Heart right ventricle (tissue), 16 donors: ENCODE measurements at regions of chr5 and their contacts with region 1.

Region 1: DNA sequence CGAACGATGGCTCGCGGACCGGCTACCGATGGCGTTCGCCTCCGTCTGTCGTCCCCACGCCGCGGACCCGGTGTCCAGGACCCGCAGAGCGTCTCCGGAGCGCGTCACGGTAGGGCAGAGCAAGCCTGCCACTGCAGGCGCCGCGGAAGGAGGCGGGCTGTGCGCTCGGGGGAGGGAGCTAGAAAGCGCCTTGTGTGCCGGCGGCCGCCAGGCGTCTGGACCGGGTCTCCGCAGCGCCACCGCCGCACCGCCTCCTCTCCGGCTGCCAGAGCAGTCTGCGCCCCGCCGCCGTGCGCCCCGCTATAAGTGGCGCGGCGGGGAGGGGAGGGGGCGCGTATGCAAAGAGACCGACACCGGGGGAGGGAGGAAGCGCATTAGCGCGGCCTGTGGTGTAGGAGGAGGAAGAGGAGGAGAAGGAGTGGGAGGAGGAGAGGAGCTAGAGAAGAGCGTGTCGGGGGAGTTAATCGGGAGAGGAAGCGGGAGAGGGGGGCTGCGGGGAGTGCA is at the start of gene ENC1:
- DNase-seq: peak; percentile 87 to 89
- ATAC-seq: peak; percentile 85 to 95 (median 89)
- H3K4me3 ChIP-seq: peak within 1 kb of the TSS; percentile 36 to 89 (median 81)
- H3K27ac ChIP-seq: peak within 1 kb of the TSS; percentile 61 to 97 (median 92)
- H3K4me1 ChIP-seq: peaks cover 5 to 67% (median 43%) of the 10 kb centered on the region in 9 donors
- H3K27me3 ChIP-seq: no peaks in the 10 kb centered on the region
- CTCF ChIP-seq: peak; percentile 44 to 70 (median 60)
- total RNA-seq, gene ENC1: 2.8 to 9.1 (median 4.0) TPM

Region 2: GRCh38 chr5:74035521-74035981 is 605.0 kb before region 1 on chr5:
- intact Hi-C with region 1: loop called (anchors 2 to 10 kb)
- DNase-seq: peak in 1 of 2 donors; percentile 63
- ATAC-seq: peak; percentile 47 to 90 (median 80)
- H3K4me3 ChIP-seq: no peak overlapping the region
- H3K27ac ChIP-seq: no peak overlapping the region
- H3K4me1 ChIP-seq: peaks cover 0 to 11% (median 5%) of the 10 kb centered on the region in 9 donors
- H3K27me3 ChIP-seq: no peaks in the 10 kb centered on the region
- CTCF ChIP-seq: peak; percentile 16 to 72 (median 52)

Region 3: DNA sequence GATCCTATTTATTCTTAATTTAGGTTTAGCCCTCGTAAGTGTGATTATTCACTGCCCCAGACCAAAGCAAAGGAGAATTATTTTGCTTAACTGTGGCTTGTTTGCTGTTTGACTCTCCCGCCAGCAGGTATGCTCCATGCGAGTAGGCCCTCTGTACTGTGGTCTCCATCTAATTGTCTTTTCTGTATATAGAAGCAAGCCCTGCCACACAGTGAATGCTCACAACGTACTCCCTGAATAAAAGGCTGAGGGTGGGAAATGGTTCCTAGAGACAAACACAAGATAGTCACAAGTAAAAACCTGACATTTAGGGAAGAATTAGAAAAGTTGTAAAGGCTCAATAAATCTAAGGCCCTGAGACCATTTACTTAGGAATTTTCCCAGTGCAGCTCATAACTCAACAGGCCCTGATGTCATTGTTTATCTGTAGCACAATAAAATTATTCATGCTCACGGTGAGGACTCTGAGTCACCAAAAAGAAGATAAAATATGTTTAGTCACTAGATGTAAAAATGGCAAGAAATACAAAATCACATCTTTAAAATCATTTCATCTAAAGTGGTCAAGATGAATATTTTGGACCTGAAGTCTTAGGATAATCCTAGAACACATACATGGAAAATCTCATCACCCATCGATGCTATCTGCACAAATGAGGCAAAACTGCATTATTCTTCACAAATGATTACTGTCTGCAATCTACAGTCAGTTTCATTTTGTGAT is 473.1 kb before region 1 on chr5:
- intact Hi-C with region 1: loop called in 2 of 10 experiments (anchors 10 kb)
- DNase-seq: no peak
- ATAC-seq: peak in 1 of 8 donors; percentile 65
- H3K4me3 ChIP-seq: no peak overlapping the region
- H3K27ac ChIP-seq: peak overlapping the region in 1 of 10 donors; percentile 7
- H3K4me1 ChIP-seq: peaks cover 0 to 33% (median 15%) of the 10 kb centered on the region in 9 donors
- H3K27me3 ChIP-seq: no peaks in the 10 kb centered on the region
- CTCF ChIP-seq: no peak

Region 4: DNA sequence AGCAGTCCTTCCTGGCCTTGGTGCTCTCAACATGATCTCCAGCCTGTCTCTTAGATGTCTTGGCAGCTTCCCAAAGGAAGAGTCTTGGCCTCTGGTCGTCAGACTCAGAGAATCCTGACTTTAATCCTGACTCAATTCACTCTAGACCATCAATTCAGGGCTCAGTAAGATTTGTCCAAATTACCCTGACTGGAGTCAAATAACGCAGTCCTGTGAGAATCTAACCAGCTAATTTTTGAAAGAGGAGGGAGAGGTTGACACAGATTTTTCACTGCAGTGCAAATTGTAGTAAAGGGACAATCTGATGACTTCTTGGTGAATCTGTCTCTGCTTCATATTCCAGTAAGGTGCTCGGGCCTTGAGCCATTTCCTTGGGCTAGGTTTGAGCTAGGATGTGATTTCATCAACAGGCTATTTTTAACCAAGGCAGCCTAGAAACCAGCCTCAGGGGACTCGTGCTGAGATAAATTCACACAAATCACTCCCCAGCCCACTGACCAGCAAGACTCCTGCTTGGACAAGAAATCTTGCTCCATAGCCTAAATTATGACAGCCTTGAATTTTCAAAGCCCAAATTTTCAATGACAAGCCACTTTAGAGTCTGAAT is 257.4 kb before region 1 on chr5:
- intact Hi-C with region 1: loop called in 5 of 10 experiments (anchors 2 to 5 kb)
- DNase-seq: peak in 1 of 2 donors; percentile 80
- ATAC-seq: peak; percentile 70 to 93 (median 87)
- H3K4me3 ChIP-seq: no peak overlapping the region
- H3K27ac ChIP-seq: peak overlapping the region; percentile 42 to 85 (median 70)
- H3K4me1 ChIP-seq: peaks cover 0 to 71% (median 45%) of the 10 kb centered on the region in 9 donors
- H3K27me3 ChIP-seq: no peaks in the 10 kb centered on the region
- CTCF ChIP-seq: no peak

Region 5: GRCh38 chr5:74500110-74500917 is 140.2 kb before region 1 on chr5:
- intact Hi-C with region 1: loop called in 1 of 10 experiments (anchors 10 kb)
- DNase-seq: no peak
- ATAC-seq: no peak
- H3K4me3 ChIP-seq: no peak overlapping the region
- H3K27ac ChIP-seq: peak overlapping the region in 1 of 10 donors; percentile 17
- H3K4me1 ChIP-seq: peaks cover 0 to 31% (median 8%) of the 10 kb centered on the region in 9 donors
- H3K27me3 ChIP-seq: no peaks in the 10 kb centered on the region
- CTCF ChIP-seq: no peak

Region 6: GRCh38 chr5:74519161-74519571 is 121.3 kb before region 1 on chr5:
- intact Hi-C with region 1: no loop called
- DNase-seq: no peak
- ATAC-seq: no peak
- H3K4me3 ChIP-seq: no peak overlapping the region
- H3K27ac ChIP-seq: no peak overlapping the region
- H3K4me1 ChIP-seq: peaks cover 0 to 19% (median 0%) of the 10 kb centered on the region in 9 donors
- H3K27me3 ChIP-seq: no peaks in the 10 kb centered on the region
- CTCF ChIP-seq: no peak